CD8-positive, alpha-beta T cell (primary cell): ENCODE measurements at regions of chr4 and their contacts with region 1.

Region 1: GRCh38 chr4:7939377-7940108 is at the start of gene AFAP1:
- DNase-seq: peak; percentile 75 to 94 (median 87)
- ATAC-seq: peak; percentile 90
- H3K4me3 ChIP-seq: peak within 1 kb of the TSS; percentile 63 to 70
- H3K4me3 Mint-ChIP-seq: peak within 1 kb of the TSS; percentile 75
- H3K27ac ChIP-seq: peak within 1 kb of the TSS in 1 of 2 experiments; percentile 62
- H3K27ac Mint-ChIP-seq: no peak within 1 kb of the TSS
- H3K4me1 ChIP-seq: peaks cover 9% of the 10 kb centered on the region
- H3K4me1 Mint-ChIP-seq: peaks cover 26% of the 10 kb centered on the region
- H3K27me3 ChIP-seq: peaks cover 0 to 5% of the 10 kb centered on the region in 2 experiments
- H3K27me3 Mint-ChIP-seq: no peaks in the 10 kb centered on the region
- CTCF ChIP-seq: no peak
- total RNA-seq, gene AFAP1: 13.4 to 13.9 TPM

Region 2: GRCh38 chr4:6716018-6716911 is 1223.3 kb before region 1 on chr4 and contains the start of gene BLOC1S4:
- CTCF ChIA-PET with region 1: no interaction called
- POLR2A ChIA-PET with region 1: no interaction called
- intact Hi-C with region 1: no loop called
- DNase-seq: peak; percentile 77 to 98 (median 88)
- ATAC-seq: peak; percentile 83
- H3K4me3 ChIP-seq: peak within 1 kb of the TSS; percentile 74 to 81
- H3K4me3 Mint-ChIP-seq: peak within 1 kb of the TSS; percentile 95
- H3K27ac ChIP-seq: peak within 1 kb of the TSS; percentile 75 to 80
- H3K27ac Mint-ChIP-seq: peak within 1 kb of the TSS; percentile 97
- H3K4me1 ChIP-seq: peaks cover 25% of the 10 kb centered on the region
- H3K4me1 Mint-ChIP-seq: peaks cover 48% of the 10 kb centered on the region
- H3K27me3 ChIP-seq: no peaks in the 10 kb centered on the region
- H3K27me3 Mint-ChIP-seq: no peaks in the 10 kb centered on the region
- CTCF ChIP-seq: peak; percentile 18
- total RNA-seq, gene BLOC1S4: 29.7 to 30.7 TPM

Region 3: DNA sequence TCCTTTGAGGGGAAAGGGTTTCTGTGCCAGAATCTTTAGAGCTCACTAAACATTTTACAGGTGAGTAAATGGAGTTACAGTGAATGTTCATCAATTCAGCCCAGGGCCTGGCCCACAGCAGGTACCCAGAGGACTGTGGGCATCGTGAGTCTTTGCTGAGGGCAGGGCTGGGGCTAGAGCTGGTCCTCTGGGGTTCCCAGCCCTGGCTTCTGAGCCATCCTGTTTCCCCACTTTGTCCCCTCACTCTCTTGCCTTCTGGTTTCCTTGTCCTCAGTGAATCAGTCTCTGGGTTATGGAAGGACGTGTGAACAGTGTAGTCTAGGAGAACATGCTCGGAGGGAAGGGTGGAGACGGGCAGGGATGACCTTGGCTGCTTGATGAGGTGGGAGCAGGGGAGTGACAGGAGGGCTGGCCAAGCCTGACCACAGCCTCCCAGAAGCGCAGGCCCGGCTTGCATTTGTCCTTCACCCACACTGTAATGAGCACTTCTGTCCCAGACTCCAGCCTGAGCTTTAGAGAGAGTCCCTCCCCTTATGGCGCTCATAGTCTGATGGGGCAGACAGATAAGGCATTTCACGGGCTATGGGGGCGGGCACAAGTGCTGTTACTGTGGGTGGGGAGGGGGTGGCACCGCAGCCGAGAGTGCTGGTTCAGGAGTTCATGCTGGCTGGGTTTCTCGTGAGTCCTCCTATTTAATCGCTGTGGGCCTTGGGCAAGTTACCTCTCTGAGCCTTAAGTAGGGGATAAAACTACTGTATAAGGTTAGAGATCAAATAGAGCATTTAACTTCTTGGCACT is 1012.7 kb before region 1 on chr4:
- CTCF ChIA-PET with region 1: no interaction called
- POLR2A ChIA-PET with region 1: no interaction called
- intact Hi-C with region 1: loop called in 1 of 2 experiments (anchors 10 kb)
- DNase-seq: peak; percentile 37 to 77 (median 65)
- ATAC-seq: peak; percentile 96
- H3K4me3 ChIP-seq: peak overlapping the region in 1 of 2 experiments; percentile 36
- H3K4me3 Mint-ChIP-seq: peak overlapping the region; percentile 75
- H3K27ac ChIP-seq: peak overlapping the region in 1 of 2 experiments; percentile 52
- H3K27ac Mint-ChIP-seq: peak overlapping the region; percentile 92
- H3K4me1 ChIP-seq: peaks cover 48% of the 10 kb centered on the region
- H3K4me1 Mint-ChIP-seq: peaks cover 84% of the 10 kb centered on the region
- H3K27me3 ChIP-seq: no peaks in the 10 kb centered on the region
- H3K27me3 Mint-ChIP-seq: no peaks in the 10 kb centered on the region
- CTCF ChIP-seq: no peak

Region 4: DNA sequence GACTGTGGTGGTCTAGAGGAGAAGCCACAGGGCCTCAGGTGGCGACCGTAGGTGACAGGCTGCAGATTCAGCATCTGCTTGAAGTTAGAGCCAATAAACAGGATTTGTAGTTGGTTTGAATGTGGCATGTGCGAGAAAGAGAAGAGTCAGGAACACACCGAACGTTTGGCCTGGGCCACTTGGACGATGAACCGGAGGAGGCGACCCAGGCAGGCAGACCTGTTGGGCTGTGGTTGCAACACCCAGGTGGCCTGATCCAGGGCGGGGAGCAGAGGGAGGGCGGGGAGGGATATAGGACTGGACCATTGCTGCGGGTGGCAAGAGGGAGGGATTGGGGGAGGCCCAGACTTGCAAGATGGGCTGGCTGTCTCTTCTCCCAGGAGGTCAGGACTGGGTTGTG is 494.8 kb before region 1 on chr4:
- CTCF ChIA-PET with region 1: no interaction called
- POLR2A ChIA-PET with region 1: no interaction called
- intact Hi-C with region 1: no loop called
- DNase-seq: no peak
- ATAC-seq: no peak
- H3K4me3 ChIP-seq: no peak overlapping the region
- H3K4me3 Mint-ChIP-seq: no peak overlapping the region
- H3K27ac ChIP-seq: no peak overlapping the region
- H3K27ac Mint-ChIP-seq: no peak overlapping the region
- H3K4me1 ChIP-seq: no peaks in the 10 kb centered on the region
- H3K4me1 Mint-ChIP-seq: peaks cover 2% of the 10 kb centered on the region
- H3K27me3 ChIP-seq: no peaks in the 10 kb centered on the region
- H3K27me3 Mint-ChIP-seq: peaks cover 16% of the 10 kb centered on the region
- CTCF ChIP-seq: no peak

Region 5: DNA sequence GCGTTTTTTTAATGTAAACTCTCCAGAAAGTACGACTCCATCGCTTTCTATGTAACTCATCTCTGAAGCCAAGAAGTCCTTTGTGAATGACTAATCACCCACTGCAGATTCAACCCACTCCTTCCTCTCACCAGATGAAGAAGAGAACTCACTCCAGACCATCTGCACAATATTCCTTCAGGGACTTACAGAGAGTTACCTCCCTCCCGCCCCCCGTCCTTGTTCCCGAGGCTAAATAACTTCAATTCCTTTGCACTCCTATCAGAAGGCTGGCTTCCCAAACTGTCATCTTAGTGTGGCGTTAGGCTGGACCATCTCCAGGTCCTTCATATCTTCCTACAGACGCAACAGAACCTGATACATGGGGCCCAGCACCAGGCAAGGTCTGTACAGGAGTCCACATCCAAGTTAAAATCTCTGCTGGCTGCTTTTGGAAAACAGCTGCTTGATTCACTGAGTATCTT is 82.3 kb before region 1 on chr4:
- CTCF ChIA-PET with region 1: no interaction called
- POLR2A ChIA-PET with region 1: interaction called, 13 read pairs
- intact Hi-C with region 1: loop called (anchors 1 to 5 kb)
- DNase-seq: no peak
- ATAC-seq: no peak
- H3K4me3 ChIP-seq: no peak overlapping the region
- H3K4me3 Mint-ChIP-seq: no peak overlapping the region
- H3K27ac ChIP-seq: no peak overlapping the region
- H3K27ac Mint-ChIP-seq: no peak overlapping the region
- H3K4me1 ChIP-seq: peaks cover 43% of the 10 kb centered on the region
- H3K4me1 Mint-ChIP-seq: peaks cover 51% of the 10 kb centered on the region
- H3K27me3 ChIP-seq: no peaks in the 10 kb centered on the region
- H3K27me3 Mint-ChIP-seq: no peaks in the 10 kb centered on the region
- CTCF ChIP-seq: no peak

Region 6: GRCh38 chr4:7973545-7973981 is 34.0 kb after region 1 on chr4:
- CTCF ChIA-PET with region 1: no interaction called
- POLR2A ChIA-PET with region 1: interaction called, 3 read pairs
- intact Hi-C with region 1: loop called (anchors 1 to 5 kb)
- DNase-seq: peak in 1 of 9 experiments; percentile 51
- ATAC-seq: no peak
- H3K4me3 ChIP-seq: no peak overlapping the region
- H3K4me3 Mint-ChIP-seq: no peak overlapping the region
- H3K27ac ChIP-seq: peak overlapping the region in 1 of 2 experiments; percentile 92
- H3K27ac Mint-ChIP-seq: peak overlapping the region; percentile 32
- H3K4me1 ChIP-seq: peaks cover 39% of the 10 kb centered on the region
- H3K4me1 Mint-ChIP-seq: peaks cover 28% of the 10 kb centered on the region
- H3K27me3 ChIP-seq: no peaks in the 10 kb centered on the region
- H3K27me3 Mint-ChIP-seq: no peaks in the 10 kb centered on the region
- CTCF ChIP-seq: no peak

Region 7: DNA sequence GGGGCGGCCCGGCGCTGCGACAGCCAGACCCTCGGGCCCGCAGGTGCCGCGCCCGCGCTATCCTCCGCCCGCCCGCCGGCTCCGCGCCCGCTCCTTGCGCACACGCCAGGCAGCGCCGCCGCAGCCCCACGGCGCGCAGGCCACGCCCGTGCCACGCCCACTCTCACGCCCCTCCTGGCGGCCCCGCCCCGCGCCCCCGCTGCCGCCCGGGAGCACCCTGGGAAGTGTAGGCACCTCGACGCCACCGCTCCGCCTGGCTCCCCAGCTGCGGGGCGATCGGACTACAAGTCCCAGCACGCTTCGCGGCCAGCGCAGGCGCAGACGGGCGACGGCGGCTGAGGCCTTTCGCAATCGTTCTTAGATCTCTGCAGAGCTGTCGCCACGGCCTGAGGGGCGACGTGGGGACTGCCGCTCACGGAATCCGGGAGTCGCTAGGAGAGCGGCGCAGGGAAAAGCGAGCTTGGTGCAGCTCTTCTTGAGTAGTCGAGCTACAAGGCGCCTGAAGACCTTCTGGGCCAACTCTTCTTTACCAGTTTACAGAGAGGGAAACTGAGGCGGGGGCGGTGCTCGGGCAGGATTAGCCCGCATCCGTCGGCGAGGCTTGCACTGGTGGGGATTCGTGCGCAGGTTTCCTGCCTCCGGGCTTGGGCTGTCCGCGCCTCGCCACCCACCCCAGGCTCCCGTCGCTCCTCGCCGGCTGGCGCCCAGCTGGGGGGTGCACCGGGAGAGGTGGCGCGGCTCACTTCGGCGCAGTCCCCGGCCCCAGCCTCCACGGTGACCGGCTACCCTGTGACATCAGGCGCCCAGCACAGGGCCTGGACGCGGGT is 219.4 kb after region 1 on chr4 and contains the start of gene ABLIM2:
- CTCF ChIA-PET with region 1: no interaction called
- POLR2A ChIA-PET with region 1: no interaction called
- intact Hi-C with region 1: loop called (anchors 2 to 5 kb)
- DNase-seq: peak; percentile 97 to 100 (median 99)
- ATAC-seq: peak; percentile 99
- H3K4me3 ChIP-seq: peak within 1 kb of the TSS; percentile 90 to 97
- H3K4me3 Mint-ChIP-seq: peak within 1 kb of the TSS; percentile 89
- H3K27ac ChIP-seq: peak within 1 kb of the TSS; percentile 48 to 56
- H3K27ac Mint-ChIP-seq: peak within 1 kb of the TSS; percentile 72
- H3K4me1 ChIP-seq: peaks cover 18% of the 10 kb centered on the region
- H3K4me1 Mint-ChIP-seq: peaks cover 16% of the 10 kb centered on the region
- H3K27me3 ChIP-seq: peaks cover 0 to 6% of the 10 kb centered on the region in 2 experiments
- H3K27me3 Mint-ChIP-seq: no peaks in the 10 kb centered on the region
- CTCF ChIP-seq: no peak
- total RNA-seq, gene ABLIM2: 1.2 to 1.6 TPM